SK-MEL-5 (cell line): ENCODE measurements at regions of chr5 and their contacts with region 1.

Region 1: DNA sequence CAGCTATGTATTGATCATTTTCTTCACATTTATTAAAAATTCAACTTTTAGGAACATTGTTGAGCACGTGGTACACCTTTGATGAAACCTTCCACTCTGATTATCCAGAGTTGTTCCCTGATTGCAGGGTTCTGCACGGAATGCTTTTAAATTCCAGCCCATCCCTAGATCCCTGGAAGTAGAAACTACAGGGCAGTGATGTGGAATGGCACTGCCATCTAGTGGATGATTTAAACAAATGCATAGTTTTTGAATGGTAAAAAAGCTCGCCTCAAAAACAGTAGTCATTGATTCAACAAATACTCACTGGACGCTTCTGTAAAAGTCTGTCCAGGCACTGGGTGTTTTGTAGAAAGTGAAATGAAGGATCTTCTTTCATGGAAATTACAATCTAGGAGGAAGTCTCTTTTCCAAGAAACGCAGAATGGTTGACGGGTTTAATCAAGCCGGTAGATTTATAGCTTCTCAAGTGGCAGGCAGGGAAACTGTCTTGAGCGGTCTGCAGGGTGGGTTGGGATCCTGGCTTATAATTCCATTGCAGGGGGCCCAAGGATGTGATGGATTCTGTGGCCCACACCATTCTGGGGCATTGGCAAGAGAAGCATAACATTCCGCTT is 118.4 kb downstream of the ARHGAP26 start:
- DNase-seq: peak; percentile 73

Region 2: GRCh38 chr5:142151436-142152383 is 736.9 kb before region 1 on chr5:
- in situ Hi-C with region 1: loop called (anchors 25 kb)
- DNase-seq: peak; percentile 78

Region 3: GRCh38 chr5:142748568-142749249 is 139.9 kb before region 1 on chr5:
- in situ Hi-C with region 1: loop called (anchors 25 kb)
- DNase-seq: peak; percentile 63